ENCODE measurements at regions of chr7 and their contacts with region 1.

Region 1: GRCh38 chr7:134986363-134987251 is at the start of gene AGBL3:
- DNase-seq: peak; percentile 99
- ATAC-seq: peak; percentile 99
- total RNA-seq, gene AGBL3: 1.2 TPM

Region 2: GRCh38 chr7:135121868-135122267 is 135.3 kb after region 1 on chr7:
- intact Hi-C with region 1: no loop called
- DNase-seq: no peak
- ATAC-seq: no peak

Region 3: DNA sequence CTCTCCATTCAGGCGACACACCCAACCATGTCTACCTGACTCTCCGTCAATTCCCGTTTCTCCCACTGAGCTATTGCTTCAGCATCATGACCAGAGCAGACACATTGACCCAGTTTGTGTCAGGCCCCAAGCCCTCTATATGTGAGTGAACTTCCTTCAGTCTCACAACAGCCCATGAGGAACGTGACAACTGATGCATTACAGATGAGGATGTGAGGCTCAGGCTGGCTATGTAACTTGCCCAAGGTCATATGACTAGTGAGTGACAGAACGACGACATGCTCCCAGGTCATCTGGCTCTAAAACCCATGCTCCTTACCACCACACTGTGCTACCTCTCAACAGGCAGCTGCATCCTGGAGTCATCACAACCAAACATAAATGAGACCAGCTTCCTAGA is 164.9 kb after region 1 on chr7:
- intact Hi-C with region 1: loop called (anchors 5 kb)
- DNase-seq: no peak
- ATAC-seq: no peak

Region 4: GRCh38 chr7:135169141-135169960 is 182.7 kb after region 1 on chr7:
- intact Hi-C with region 1: loop called (anchors 5 kb)
- DNase-seq: no peak
- ATAC-seq: no peak